Activated B cell treated with CpG ODN at 0.5 μM for 24 hours (primary cell): ENCODE measurements at regions of chr11 and their contacts with region 1.

Region 1: DNA sequence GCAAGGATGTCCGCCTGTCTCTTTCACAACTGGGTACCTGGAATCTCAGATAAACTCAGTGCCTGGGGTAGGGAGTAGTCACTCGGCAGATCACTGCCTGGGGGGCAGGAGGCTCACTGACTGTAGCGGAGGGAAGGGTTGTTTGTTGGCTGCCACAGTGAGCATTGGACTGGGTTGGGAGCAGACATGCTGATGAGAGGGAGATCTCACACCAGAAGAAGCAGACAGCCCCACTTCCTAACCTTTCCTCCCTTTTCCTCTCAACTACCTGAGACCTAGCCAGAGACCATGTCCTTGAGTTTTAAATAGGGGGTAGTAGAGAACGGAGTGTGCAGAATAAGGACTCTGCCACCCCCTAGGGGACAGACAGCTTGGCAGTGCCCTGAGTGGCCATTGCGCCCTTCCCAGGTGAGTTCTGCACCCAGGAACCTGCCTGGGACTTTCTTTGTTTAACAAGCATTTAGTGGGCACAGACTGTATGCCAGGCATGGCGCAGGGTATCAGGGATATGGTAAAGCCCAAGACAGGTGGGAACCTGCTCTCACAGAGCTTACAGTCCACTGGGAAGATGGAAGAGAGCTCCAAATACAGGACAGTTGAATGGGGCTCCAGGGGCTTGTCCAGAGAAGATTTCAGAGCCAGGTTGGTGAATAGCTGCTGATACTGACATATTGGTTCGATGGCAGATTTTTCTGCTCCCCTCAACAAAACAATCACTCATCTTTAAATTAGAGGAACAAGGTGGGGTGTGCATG is 115.7 kb upstream of the NNMT start:
- DNase-seq: no peak
- ATAC-seq: peak; percentile 55
- H3K4me3 Mint-ChIP-seq: no peak overlapping the region
- H3K27ac Mint-ChIP-seq: peak overlapping the region; percentile 69
- H3K4me1 Mint-ChIP-seq: peaks cover 70% of the 10 kb centered on the region
- H3K27me3 Mint-ChIP-seq: no peaks in the 10 kb centered on the region
- CTCF ChIP-seq: no peak

Region 2: DNA sequence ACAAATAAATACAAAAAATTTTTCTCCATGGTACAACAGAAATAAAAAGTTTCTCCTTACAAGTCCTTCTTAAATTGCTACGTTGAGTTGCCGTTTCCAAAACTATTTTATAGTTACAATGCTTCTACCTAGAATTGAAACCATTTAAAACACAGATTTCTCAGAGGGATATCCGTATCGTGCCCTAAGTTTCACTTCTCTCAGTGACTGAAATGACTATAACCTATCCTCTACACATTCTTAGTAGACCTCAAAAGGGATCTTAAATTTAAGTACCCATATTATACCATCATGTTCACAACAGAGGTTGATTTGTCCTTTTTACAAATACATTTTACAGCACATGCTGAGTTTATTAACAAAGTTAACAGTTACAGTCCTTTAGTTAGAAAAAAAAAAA is 349.2 kb before region 1 on chr11:
- CTCF ChIA-PET with region 1: no interaction called
- POLR2A ChIA-PET with region 1: no interaction called
- intact Hi-C with region 1: no loop called
- DNase-seq: no peak
- ATAC-seq: peak; percentile 93
- H3K4me3 Mint-ChIP-seq: peak overlapping the region; percentile 68
- H3K27ac Mint-ChIP-seq: peak overlapping the region; percentile 84
- H3K4me1 Mint-ChIP-seq: peaks cover 31% of the 10 kb centered on the region
- H3K27me3 Mint-ChIP-seq: no peaks in the 10 kb centered on the region
- CTCF ChIP-seq: no peak

Region 3: DNA sequence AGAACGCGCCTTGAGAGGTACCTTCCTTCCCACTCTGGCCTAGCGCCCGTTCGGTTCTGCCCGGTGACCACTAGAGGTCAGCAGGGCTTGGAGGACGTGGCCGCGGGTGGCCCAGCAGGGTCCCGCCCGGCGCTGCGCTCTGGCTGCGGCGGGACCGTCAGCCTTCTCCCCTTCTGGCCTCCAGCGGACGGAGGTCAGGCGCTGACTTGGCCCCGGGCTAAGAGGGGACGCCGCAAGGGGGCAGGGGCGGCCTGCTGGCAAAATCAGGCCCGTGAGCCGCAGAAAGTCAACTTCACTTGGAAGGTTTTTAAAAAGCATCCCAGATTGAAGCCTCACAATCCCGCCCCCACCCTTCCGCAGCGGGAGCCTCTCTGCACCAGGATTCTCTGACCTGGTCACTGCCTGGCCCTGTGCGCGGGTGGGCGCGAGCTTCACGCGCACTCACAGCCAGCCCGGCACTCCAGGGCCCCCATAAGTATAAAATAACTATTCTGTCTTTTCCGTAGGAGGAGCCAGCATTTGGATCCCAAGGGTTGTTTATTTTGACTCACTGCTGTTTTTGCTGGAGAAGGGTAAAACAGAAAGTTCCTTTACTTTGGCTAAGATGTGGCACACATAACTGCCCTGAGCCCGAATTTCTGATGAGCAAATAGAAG is 144.2 kb before region 1 on chr11:
- CTCF ChIA-PET with region 1: interaction called, 8 read pairs
- POLR2A ChIA-PET with region 1: no interaction called
- intact Hi-C with region 1: loop called (anchors 1 kb)
- DNase-seq: peak; percentile 37
- ATAC-seq: peak; percentile 86
- H3K4me3 Mint-ChIP-seq: no peak overlapping the region
- H3K27ac Mint-ChIP-seq: no peak overlapping the region
- H3K4me1 Mint-ChIP-seq: peaks cover 3% of the 10 kb centered on the region
- H3K27me3 Mint-ChIP-seq: peaks cover 15% of the 10 kb centered on the region
- CTCF ChIP-seq: no peak

Region 4: DNA sequence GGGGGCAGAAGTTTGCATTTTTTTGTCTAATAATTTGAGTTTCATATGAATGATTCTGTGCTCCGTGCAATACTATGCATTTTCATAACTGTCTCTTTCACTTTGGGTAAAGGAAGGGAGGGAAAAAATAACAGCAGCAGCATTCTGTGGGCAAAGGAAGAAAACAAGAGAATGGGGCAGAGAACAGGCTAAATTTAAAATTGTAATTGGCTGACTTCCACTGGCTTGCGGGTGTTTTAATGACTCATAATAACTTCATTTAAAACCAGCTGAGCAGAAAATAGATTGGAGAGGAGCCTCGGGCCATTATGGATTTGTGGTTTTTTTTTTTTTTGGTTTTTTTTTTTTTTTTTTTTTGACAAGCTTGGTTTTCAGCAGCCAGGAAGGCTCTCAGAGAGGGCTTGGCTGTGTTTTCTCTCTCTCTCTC is 13.6 kb before region 1 on chr11:
- CTCF ChIA-PET with region 1: interaction called, 11 read pairs
- POLR2A ChIA-PET with region 1: interaction called, 3 read pairs
- intact Hi-C with region 1: no loop called
- DNase-seq: no peak
- ATAC-seq: peak; percentile 27
- H3K4me3 Mint-ChIP-seq: peak overlapping the region; percentile 65
- H3K27ac Mint-ChIP-seq: peak overlapping the region; percentile 71
- H3K4me1 Mint-ChIP-seq: peaks cover 88% of the 10 kb centered on the region
- H3K27me3 Mint-ChIP-seq: no peaks in the 10 kb centered on the region
- CTCF ChIP-seq: no peak